Dorsolateral prefrontal cortex (tissue), 120 donors: ENCODE measurements at regions of chr5 and their contacts with region 1.

Region 1: GRCh38 chr5:157858527-157859226 is at the start of gene CLINT1:
- DNase-seq: peak; percentile 85 to 97 (median 92)
- H3K4me3 ChIP-seq: peak within 1 kb of the TSS; percentile 70 to 99 (median 90)
- H3K27ac ChIP-seq: peak within 1 kb of the TSS in 51 of 59 donors; percentile 8 to 91 (median 66)
- H3K27me3 ChIP-seq: no peaks in the 10 kb centered on the region
- CTCF ChIP-seq: peak in 39 of 56 donors; percentile 16 to 62 (median 34)
- total RNA-seq, gene CLINT1: 30.7 to 54.6 (median 40.7) TPM

Region 2: GRCh38 chr5:157948738-157949410 is 90.2 kb after region 1 on chr5:
- intact Hi-C with region 1: loop called (anchors 2 to 5 kb)
- DNase-seq: peak; percentile 46 to 90 (median 82)
- H3K4me3 ChIP-seq: peak overlapping the region in 12 of 59 donors; percentile 4 to 31 (median 13)
- H3K27ac ChIP-seq: no peak overlapping the region
- H3K27me3 ChIP-seq: peaks cover 0 to 45% (median 0%) of the 10 kb centered on the region in 45 donors
- CTCF ChIP-seq: peak; percentile 68 to 95 (median 87)